Endothelial cell of umbilical vein (primary cell): ENCODE measurements at regions of chr3 and their contacts with region 1.

Region 1: DNA sequence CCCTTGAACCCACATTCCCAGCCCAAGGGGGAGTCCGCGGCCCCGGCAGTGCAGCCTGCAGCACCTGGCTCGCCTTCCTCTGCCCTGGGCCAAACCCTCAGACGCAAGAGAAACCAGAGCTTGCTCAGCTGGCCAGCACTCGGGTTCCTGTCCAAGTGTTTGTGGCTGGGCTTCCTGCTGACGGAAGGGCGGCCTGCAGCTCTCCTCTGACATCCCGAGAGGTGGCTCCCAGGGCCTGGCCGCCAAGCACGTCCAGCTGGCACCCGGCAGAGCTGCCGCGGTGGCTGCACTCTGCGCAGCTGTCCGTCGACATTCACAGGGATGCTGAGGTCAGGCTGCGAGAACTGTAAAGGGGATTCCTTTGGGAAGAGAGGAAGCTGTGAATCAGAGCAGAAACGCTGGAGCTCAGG is 85.6 kb downstream of the CPN2 start:
- DNase-seq: peak; percentile 99
- H3K4me3 ChIP-seq: no peak overlapping the region
- H3K27ac ChIP-seq: peak overlapping the region; percentile 97
- H3K4me1 ChIP-seq: peaks cover 39% of the 10 kb centered on the region
- H3K27me3 ChIP-seq: no peaks in the 10 kb centered on the region
- CTCF ChIP-seq: no peak
- POLR2A ChIP-seq: no peak

Region 2: DNA sequence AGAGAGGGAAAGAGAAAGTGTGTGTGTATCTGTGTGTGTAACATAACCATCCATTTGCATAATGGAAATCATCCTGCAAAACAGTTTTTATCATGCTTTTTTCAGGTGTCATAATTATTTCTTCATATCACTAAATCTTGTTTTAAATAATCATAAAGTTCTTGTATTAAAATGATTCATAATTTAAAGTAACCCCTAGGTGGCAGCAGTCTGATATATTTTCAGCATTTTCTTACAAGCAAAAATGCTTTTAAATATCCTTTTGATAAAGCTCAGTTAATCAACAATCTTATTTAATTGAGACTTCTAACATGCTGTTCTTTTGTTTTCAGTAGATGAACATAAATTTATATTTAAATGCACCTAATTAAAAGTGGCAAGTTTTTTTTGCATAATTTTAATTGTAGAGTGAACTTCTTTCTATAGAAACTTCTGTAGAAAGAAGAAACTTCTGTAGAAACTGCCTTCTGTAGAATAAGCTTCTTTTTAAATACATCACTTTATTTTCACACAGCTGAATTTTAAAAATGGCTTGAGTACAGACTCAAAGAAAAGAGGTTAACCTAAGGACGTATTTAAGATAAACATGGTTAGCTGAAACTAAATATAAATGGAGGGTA is 600.0 kb before region 1 on chr3:
- CTCF ChIA-PET with region 1: interaction called, 12 read pairs
- POLR2A ChIA-PET with region 1: no interaction called
- dilution Hi-C with region 1: no loop called
- intact Hi-C with region 1: no loop called
- DNase-seq: peak; percentile 57
- H3K4me3 ChIP-seq: no peak overlapping the region
- H3K27ac ChIP-seq: no peak overlapping the region
- H3K4me1 ChIP-seq: no peaks in the 10 kb centered on the region
- H3K27me3 ChIP-seq: no peaks in the 10 kb centered on the region
- CTCF ChIP-seq: peak in 1 of 2 donors; percentile 22
- POLR2A ChIP-seq: no peak

Region 3: GRCh38 chr3:193872265-193872753 is 393.2 kb before region 1 on chr3:
- CTCF ChIA-PET with region 1: no interaction called
- POLR2A ChIA-PET with region 1: no interaction called
- dilution Hi-C with region 1: no loop called
- intact Hi-C with region 1: loop called (anchors 2 kb)
- DNase-seq: peak; percentile 72
- H3K4me3 ChIP-seq: no peak overlapping the region
- H3K27ac ChIP-seq: peak overlapping the region; percentile 6
- H3K4me1 ChIP-seq: peaks cover 33% of the 10 kb centered on the region
- H3K27me3 ChIP-seq: no peaks in the 10 kb centered on the region
- CTCF ChIP-seq: no peak
- POLR2A ChIP-seq: peak; percentile 30

Region 4: DNA sequence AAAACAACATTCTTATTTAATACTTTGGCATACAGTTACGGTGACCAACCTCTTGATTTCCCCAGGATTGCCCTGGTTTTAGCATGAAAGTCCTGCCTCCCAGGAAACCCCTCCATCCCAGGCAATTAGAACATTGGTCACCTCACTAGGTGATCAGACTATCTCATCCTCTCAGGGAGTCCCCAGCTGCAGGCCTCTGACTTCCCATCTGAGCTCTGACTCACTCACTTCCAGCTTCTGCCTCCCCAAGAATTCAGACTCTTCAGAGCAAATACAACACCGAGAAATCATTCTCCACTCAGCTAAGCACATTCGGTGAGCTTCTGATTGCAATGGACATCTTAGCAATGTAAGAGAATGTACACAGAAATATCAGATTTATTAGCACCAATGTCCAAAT is 222.0 kb before region 1 on chr3:
- CTCF ChIA-PET with region 1: interaction called, 3 read pairs
- POLR2A ChIA-PET with region 1: no interaction called
- dilution Hi-C with region 1: no loop called
- intact Hi-C with region 1: loop called (anchors 1 kb)
- DNase-seq: peak; percentile 77
- H3K4me3 ChIP-seq: no peak overlapping the region
- H3K27ac ChIP-seq: peak overlapping the region; percentile 56
- H3K4me1 ChIP-seq: peaks cover 35% of the 10 kb centered on the region
- H3K27me3 ChIP-seq: no peaks in the 10 kb centered on the region
- CTCF ChIP-seq: no peak
- POLR2A ChIP-seq: no peak

Region 5: DNA sequence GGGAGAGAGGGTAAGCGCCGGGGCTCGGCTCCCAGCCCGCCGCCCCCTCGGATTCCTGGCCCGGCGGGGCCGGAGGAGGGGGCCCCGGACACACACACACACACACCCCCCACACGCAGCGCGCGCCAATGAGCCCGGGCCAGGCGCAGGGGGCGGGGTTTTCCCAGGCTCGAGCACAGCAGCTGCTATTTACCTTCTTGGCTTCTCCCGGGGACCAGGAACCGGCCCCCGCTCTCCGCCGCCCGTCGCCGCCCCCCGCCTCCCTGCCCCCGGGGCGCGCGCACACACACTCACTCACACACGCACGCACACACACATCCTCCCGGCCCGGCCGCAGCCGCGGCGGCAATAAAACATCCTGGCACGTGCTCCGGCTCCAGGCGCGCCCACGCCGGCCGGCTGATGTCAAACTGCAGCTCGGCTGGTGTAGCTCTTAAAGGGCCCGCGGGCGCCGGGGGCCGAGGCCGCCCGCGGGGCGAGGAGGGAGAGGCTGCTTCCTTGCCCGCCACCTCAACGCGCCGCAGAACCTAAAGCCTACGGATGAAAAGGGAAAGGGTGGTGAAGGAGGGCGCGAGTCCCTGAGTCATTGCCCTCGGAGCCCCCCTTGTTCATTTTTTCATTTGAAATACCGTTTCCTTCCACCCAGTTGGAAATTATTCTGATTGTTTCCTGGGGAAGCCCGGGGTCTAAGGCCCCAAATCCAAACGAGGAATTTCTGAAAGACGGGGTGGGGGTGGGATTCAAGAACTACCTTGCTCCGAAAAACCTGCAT is 130.5 kb before region 1 on chr3:
- CTCF ChIA-PET with region 1: interaction called, 86 read pairs
- POLR2A ChIA-PET with region 1: interaction called, 16 read pairs
- dilution Hi-C with region 1: no loop called
- intact Hi-C with region 1: loop called (anchors 1 kb)
- DNase-seq: peak; percentile 99
- H3K4me3 ChIP-seq: peak overlapping the region in 2 of 3 experiments; percentile 13 to 51
- H3K27ac ChIP-seq: peak overlapping the region; percentile 96
- H3K4me1 ChIP-seq: peaks cover 24% of the 10 kb centered on the region
- H3K27me3 ChIP-seq: no peaks in the 10 kb centered on the region
- CTCF ChIP-seq: no peak
- POLR2A ChIP-seq: peak; percentile 27

Region 6: DNA sequence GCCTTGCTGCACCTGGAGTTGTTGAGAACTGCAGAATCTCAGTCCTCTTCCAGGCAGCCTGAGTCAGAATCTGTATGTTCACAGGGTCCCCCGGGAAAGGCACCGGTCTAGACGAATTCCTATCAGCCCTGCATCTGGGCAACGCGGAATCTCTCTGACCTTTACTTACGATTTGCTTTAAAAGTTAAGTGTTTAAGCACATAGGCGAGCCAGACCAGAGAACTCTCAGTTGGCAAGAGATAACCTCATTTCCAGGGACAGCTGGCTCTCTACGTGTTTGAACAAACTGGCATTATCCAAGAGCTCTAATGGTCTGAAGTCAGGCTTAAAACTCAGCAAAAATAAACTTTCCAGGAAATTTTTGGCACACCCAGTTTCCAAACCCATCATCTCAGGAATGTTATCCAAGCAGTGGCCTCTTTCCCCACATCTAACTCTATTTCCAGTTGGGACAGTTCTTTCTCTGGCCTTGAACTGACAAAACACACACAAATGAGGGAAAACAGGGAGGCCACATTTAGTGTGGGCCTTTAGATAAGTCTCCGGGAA is 76.2 kb before region 1 on chr3:
- CTCF ChIA-PET with region 1: no interaction called
- POLR2A ChIA-PET with region 1: no interaction called
- dilution Hi-C with region 1: no loop called
- intact Hi-C with region 1: loop called (anchors 1 kb)
- DNase-seq: peak; percentile 66
- H3K4me3 ChIP-seq: no peak overlapping the region
- H3K27ac ChIP-seq: no peak overlapping the region
- H3K4me1 ChIP-seq: peaks cover 8% of the 10 kb centered on the region
- H3K27me3 ChIP-seq: no peaks in the 10 kb centered on the region
- CTCF ChIP-seq: no peak
- POLR2A ChIP-seq: no peak

Region 7: GRCh38 chr3:194296454-194297263 is 31.2 kb after region 1 on chr3:
- CTCF ChIA-PET with region 1: interaction called, 14 read pairs
- POLR2A ChIA-PET with region 1: interaction called, 6 read pairs
- dilution Hi-C with region 1: no loop called
- intact Hi-C with region 1: no loop called
- DNase-seq: peak; percentile 82
- H3K4me3 ChIP-seq: peak overlapping the region in 2 of 3 experiments; percentile 2 to 13
- H3K27ac ChIP-seq: peak overlapping the region; percentile 90
- H3K4me1 ChIP-seq: peaks cover 13% of the 10 kb centered on the region
- H3K27me3 ChIP-seq: no peaks in the 10 kb centered on the region
- CTCF ChIP-seq: no peak
- POLR2A ChIP-seq: no peak

Region 8: GRCh38 chr3:194381460-194381875 is 116.0 kb after region 1 on chr3:
- CTCF ChIA-PET with region 1: no interaction called
- POLR2A ChIA-PET with region 1: no interaction called
- dilution Hi-C with region 1: no loop called
- intact Hi-C with region 1: no loop called
- DNase-seq: no peak
- H3K4me3 ChIP-seq: no peak overlapping the region
- H3K27ac ChIP-seq: no peak overlapping the region
- H3K4me1 ChIP-seq: peaks cover 4% of the 10 kb centered on the region
- H3K27me3 ChIP-seq: peaks cover 6 to 17% of the 10 kb centered on the region in 2 experiments
- CTCF ChIP-seq: no peak
- POLR2A ChIP-seq: no peak

Region 9: GRCh38 chr3:194583604-194584318 is 318.3 kb after region 1 on chr3:
- CTCF ChIA-PET with region 1: no interaction called
- POLR2A ChIA-PET with region 1: no interaction called
- dilution Hi-C with region 1: no loop called
- intact Hi-C with region 1: no loop called
- DNase-seq: peak; percentile 95
- H3K4me3 ChIP-seq: peak overlapping the region; percentile 27 to 91 (median 61)
- H3K27ac ChIP-seq: peak overlapping the region; percentile 80
- H3K4me1 ChIP-seq: peaks cover 49% of the 10 kb centered on the region
- H3K27me3 ChIP-seq: no peaks in the 10 kb centered on the region
- CTCF ChIP-seq: no peak
- POLR2A ChIP-seq: peak; percentile 94